A549 (cell line): ENCODE measurements at regions of chr7 and their contacts with region 1.

Region 1: DNA sequence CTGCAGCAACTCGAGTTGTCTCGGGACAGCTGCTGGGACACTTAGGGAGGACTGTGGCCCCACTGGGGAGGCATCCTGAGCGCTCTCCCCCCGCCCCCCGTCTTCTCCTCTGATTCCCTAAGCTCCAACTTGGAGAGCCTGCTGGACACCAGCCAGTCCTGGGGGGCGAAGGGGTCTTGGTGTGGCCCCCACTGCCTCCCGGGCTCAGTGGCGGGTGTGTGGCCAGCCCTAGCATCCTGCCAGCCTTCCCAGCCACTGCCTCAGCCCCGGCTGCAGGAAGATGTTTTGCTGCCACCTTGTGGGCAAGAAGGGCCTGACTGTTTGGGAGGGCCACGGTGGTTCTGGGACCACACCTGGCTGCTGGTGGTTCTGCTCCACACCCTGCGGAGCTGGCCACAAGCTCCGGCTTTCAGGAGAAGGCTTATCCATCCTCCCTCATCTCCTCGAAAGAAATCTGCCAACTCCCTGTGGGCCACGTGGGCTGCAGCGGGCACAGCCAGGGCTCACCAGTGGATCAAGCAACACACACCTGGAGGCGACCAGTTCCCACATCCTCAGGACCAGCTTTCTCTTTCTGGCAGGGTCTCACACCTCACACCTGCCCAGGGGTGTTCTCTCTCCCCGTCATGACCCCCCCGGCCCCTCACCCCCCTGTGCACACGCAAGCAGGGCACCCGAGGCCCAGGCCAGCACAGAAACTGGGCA is 24.8 kb downstream of the AGAP3 start:
- DNase-seq: peak; percentile 70 to 92
- ATAC-seq: peak; percentile 81 to 89
- H3K4me3 ChIP-seq: no peak overlapping the region
- H3K27ac ChIP-seq: peak overlapping the region in 1 of 2 experiments; percentile 61; a peak in 2 of 6 replicates
- H3K4me1 ChIP-seq: peaks cover 38% of the 10 kb centered on the region
- CTCF ChIP-seq: peak; percentile 82
- EP300 ChIP-seq: no peak
- POLR2A ChIP-seq: no peak
- RAD21 ChIP-seq: peak; percentile 91

Region 2: GRCh38 chr7:150448789-150449147 is 662.3 kb before region 1 on chr7:
- CTCF ChIA-PET with region 1: no interaction called
- POLR2A ChIA-PET with region 1: no interaction called
- DNase-seq: peak; percentile 60 to 84
- ATAC-seq: peak; percentile 85 to 95
- H3K4me3 ChIP-seq: no peak overlapping the region
- H3K27ac ChIP-seq: no peak overlapping the region; a peak in 1 of 6 replicates
- H3K4me1 ChIP-seq: no peaks in the 10 kb centered on the region
- CTCF ChIP-seq: peak; percentile 82
- EP300 ChIP-seq: no peak
- POLR2A ChIP-seq: no peak
- RAD21 ChIP-seq: peak; percentile 73 to 82

Region 3: DNA sequence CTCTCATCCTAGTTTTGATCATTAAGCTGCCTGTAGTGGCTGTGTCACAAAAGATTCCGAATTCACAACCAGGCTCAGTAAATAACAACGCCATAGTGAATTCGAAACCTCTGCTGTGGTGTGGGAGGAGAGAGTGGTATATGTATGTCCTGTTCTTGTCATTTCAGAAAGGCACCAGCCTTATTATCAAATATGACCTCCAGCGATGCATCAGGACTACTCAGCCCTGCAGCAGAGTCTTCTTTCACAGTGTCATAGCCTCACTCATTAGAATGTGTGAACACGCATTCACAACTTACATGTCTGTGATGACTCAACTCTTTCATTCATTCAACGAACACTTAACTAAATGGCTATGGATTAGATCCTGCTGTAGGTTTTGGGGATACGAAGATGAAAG is 243.5 kb before region 1 on chr7:
- CTCF ChIA-PET with region 1: no interaction called
- POLR2A ChIA-PET with region 1: no interaction called
- DNase-seq: no peak
- ATAC-seq: no peak
- H3K4me3 ChIP-seq: no peak overlapping the region
- H3K27ac ChIP-seq: no peak overlapping the region
- H3K4me1 ChIP-seq: no peaks in the 10 kb centered on the region
- CTCF ChIP-seq: no peak
- EP300 ChIP-seq: no peak
- POLR2A ChIP-seq: no peak
- RAD21 ChIP-seq: no peak

Region 4: DNA sequence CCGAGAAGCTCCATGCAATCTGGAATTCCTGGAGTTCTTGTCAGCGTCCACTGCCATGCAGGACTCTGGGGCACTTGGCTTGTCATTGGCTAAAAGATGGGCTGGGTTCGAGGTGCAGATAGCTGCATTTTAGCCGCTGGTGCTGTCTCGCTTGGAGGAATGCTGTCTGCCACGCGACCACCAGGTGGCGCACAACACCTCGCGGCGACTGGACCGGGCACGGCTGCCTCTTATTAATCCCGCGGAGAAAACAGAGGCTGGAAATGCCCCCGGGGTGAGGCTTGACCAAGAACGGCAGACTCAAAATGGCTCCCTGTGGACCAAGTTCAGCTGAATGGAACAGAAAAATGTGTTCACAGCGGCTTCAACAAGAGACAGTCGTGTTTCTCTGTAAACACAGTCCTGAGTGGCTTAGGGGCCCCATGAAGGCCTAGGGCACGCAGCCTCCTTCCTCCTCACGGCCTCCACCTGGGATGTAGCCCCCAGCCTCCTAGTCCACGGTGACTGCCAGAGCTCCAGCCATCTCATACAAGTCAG is 212.6 kb before region 1 on chr7:
- CTCF ChIA-PET with region 1: interaction called, 16 read pairs
- POLR2A ChIA-PET with region 1: no interaction called
- DNase-seq: peak; percentile 68 to 79
- ATAC-seq: peak; percentile 83 to 95
- H3K4me3 ChIP-seq: no peak overlapping the region
- H3K27ac ChIP-seq: no peak overlapping the region
- H3K4me1 ChIP-seq: no peaks in the 10 kb centered on the region
- CTCF ChIP-seq: peak; percentile 84
- EP300 ChIP-seq: no peak
- POLR2A ChIP-seq: no peak
- RAD21 ChIP-seq: peak; percentile 73 to 74

Region 5: GRCh38 chr7:150988230-150989226 is 122.6 kb before region 1 on chr7:
- CTCF ChIA-PET with region 1: interaction called, 14 read pairs
- POLR2A ChIA-PET with region 1: no interaction called
- DNase-seq: peak in 1 of 2 experiments; percentile 36
- ATAC-seq: peak; percentile 5 to 69; a peak in 4 of 6 replicates
- H3K4me3 ChIP-seq: no peak overlapping the region
- H3K27ac ChIP-seq: no peak overlapping the region
- H3K4me1 ChIP-seq: no peaks in the 10 kb centered on the region
- CTCF ChIP-seq: peak; percentile 62
- EP300 ChIP-seq: no peak
- POLR2A ChIP-seq: no peak
- RAD21 ChIP-seq: peak; percentile 64 to 77

Region 6: DNA sequence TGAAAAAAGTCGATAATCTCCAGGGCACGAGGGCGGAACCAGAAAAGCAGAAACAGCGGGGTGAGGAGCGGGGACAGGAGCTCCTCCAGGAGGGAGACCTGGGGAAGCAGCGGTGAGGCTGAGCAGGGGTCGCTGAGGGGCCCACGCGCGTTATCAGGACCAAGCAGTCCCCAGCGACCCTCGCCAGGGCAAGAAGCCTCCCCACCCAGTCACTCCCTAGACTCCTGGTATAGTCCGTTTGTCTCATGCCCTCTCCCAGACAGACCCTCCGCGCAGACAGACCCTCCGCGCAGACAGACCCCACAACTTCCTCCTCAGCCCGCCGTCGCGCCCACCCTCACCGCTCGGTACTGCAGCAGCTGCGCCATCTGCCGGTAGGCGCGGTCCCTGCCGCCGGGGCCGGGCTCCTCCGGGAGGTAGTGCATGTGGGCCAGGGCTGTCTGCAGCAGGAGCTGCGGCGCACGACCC is 93.1 kb before region 1 on chr7:
- CTCF ChIA-PET with region 1: interaction called, 40 read pairs
- POLR2A ChIA-PET with region 1: interaction called, 5 read pairs
- DNase-seq: peak; percentile 55 to 71
- ATAC-seq: peak; percentile 72 to 94
- H3K4me3 ChIP-seq: peak overlapping the region; percentile 30; the same call in 2 of the 3 replicates
- H3K27ac ChIP-seq: peak overlapping the region in 1 of 2 experiments; percentile 75; a peak in 2 of 6 replicates
- H3K4me1 ChIP-seq: peaks cover 6% of the 10 kb centered on the region; the same call in 2 of the 3 replicates
- CTCF ChIP-seq: peak; percentile 88
- EP300 ChIP-seq: no peak
- POLR2A ChIP-seq: no peak
- RAD21 ChIP-seq: peak; percentile 58 to 64

Region 7: GRCh38 chr7:151057989-151058780 is 52.9 kb before region 1 on chr7:
- CTCF ChIA-PET with region 1: interaction called, 44 read pairs
- POLR2A ChIA-PET with region 1: no interaction called
- DNase-seq: peak; percentile 99 to 100
- ATAC-seq: peak; percentile 54 to 82
- H3K4me3 ChIP-seq: peak overlapping the region; percentile 86
- H3K27ac ChIP-seq: peak overlapping the region; percentile 99
- H3K4me1 ChIP-seq: peaks cover 24% of the 10 kb centered on the region
- CTCF ChIP-seq: no peak
- EP300 ChIP-seq: no peak
- POLR2A ChIP-seq: peak; percentile 75
- RAD21 ChIP-seq: no peak

Region 8: DNA sequence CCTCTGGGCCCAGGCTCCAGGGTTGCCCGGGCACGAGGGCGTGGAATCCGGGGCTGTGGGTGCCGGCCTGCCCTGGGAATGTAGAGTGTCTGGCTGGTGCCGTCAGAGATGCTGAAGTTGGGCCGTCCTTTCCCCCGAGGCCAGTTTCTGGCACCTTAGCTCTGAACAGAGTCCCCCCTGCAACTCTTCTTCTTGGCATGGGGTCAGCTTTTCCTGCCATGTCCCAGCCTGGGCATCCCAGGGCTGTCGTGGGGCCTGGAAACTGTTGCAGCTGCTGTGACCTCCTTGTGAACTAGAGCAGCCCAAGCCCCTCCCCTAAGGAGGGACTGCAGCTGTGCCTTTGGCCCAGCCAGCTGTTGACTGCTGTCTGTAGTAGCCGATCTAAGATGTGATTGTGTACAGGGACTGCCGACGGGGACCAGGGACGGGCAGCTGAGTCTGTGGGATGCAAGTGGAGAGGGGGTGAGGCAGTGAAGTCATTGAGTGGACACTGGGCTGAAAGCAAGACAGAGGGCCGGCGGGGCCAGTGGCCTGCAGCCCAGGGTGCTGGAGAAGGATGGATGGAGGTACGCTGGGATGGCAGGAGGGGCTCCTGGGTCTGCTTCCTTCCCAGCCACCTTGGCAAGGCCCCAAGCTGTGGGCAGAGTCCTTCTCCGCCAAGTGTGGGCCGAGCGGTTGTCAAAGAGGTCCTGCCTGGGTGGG is 20.6 kb after region 1 on chr7:
- CTCF ChIA-PET with region 1: interaction called, 25 read pairs
- POLR2A ChIA-PET with region 1: no interaction called
- DNase-seq: no peak
- ATAC-seq: no peak
- H3K4me3 ChIP-seq: no peak overlapping the region
- H3K27ac ChIP-seq: no peak overlapping the region
- H3K4me1 ChIP-seq: no peaks in the 10 kb centered on the region
- CTCF ChIP-seq: no peak
- EP300 ChIP-seq: no peak
- POLR2A ChIP-seq: no peak
- RAD21 ChIP-seq: no peak